Esophagus squamous epithelium (tissue), 5 donors: ENCODE measurements at regions of chr16 and their contacts with region 1.

Region 1: DNA sequence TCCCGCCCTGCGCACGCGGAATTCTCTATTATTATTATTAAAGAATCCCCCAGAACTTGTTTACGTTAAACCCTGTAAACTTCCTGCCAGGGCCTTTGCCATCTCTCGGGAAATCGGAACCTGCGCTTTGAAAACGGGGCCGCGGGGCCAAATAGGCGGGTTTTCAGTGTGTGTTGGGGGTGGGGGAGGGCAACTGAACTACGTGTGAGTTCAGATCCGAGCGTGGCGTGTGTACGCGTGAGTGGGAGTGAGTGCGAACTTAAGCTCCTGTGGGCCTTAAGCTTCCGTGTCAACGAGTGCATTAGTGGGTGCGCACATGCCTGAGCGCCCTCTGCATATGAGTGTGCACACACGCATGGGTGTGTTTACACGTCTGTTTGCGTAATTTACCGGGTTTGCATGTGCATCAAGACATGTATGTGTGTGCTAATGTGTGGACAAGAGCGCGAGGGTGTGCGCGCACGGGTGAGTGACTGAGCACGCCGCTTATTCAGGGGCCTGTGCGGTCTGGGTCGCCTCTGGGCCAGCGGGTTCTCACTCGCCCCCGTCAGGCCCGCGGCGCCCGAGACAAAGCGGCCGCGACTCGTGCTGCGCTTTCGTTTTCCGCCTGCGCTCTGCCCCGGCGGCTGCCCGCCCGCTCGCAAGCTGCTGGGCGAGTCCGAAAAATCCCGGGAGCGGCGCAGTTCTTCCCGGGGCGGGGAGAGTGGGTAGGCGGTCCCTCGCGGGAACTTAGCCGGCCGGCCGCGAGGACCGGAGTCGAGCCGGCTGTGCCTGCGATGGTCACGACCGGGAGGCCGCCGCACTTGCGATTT is 1.2 kb upstream of the FOXF1 start:
- DNase-seq: no peak
- H3K4me3 ChIP-seq: peak overlapping the region; percentile 39 to 69 (median 64)
- H3K27ac ChIP-seq: peak overlapping the region; percentile 83 to 95 (median 94)
- H3K4me1 ChIP-seq: peaks cover 19 to 77% (median 29%) of the 10 kb centered on the region in 3 donors
- H3K27me3 ChIP-seq: peaks cover 0 to 100% (median 29%) of the 10 kb centered on the region in 4 donors
- CTCF ChIP-seq: no peak
- POLR2A ChIP-seq: peak in 2 of 4 donors; percentile 20 to 54

Region 2: DNA sequence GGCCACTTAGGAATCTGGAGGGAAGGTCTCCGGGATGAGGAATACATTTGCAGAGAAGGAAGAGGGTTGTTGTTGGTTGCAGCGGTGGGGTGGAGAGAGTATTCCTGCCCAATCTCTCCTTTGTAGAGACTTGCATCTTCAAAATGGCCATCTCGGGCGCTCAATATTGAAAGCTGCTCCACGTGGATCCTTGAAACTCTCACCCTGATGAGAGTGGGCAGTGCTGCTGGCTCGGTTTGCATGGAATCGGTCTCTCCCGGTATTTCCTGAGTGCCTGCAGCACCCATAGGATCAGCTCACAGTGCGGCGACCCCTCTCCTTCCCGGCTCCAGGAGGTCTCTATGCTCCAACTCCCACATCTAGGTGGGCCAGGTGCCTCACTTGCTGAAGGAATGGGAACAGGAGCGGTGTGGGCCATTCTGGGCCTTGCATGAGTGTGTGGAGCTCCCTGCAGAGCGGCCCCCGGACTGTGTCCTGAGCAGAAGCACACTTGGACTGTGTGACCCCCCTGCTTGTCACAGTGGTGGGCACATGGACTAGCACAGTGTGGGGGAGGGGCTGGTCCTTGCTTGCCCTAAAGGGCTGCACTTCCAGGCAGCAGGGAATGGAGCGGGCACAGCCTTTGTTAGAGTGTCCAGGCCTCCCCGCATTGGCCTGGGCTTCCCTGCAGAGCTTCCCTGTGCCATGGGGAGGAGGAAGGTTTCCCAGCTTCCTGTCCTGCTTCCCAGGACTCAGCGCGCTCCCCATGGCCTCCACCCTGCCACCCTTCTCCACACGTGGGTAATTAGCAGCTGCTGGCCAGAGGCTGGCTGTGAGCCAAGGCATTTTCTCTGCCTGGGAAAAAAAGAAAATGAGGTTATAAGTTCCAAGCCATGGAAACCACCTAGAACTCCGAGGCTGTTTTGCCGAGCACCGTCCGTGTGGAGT is 470.9 kb before region 1 on chr16:
- intact Hi-C with region 1: no loop called
- DNase-seq: no peak
- H3K4me3 ChIP-seq: no peak overlapping the region
- H3K27ac ChIP-seq: no peak overlapping the region
- H3K4me1 ChIP-seq: peaks cover 0 to 10% (median 0%) of the 10 kb centered on the region in 3 donors
- H3K27me3 ChIP-seq: peaks cover 0 to 24% (median 0%) of the 10 kb centered on the region in 4 donors
- CTCF ChIP-seq: no peak
- POLR2A ChIP-seq: no peak

Region 3: GRCh38 chr16:86343027-86343787 is 165.9 kb before region 1 on chr16:
- intact Hi-C with region 1: loop called (anchors 5 kb)
- DNase-seq: no peak
- H3K4me3 ChIP-seq: peak overlapping the region in 2 of 4 donors; percentile 8 to 47
- H3K27ac ChIP-seq: peak overlapping the region; percentile 74 to 95 (median 91)
- H3K4me1 ChIP-seq: peaks cover 4 to 23% (median 13%) of the 10 kb centered on the region in 3 donors
- H3K27me3 ChIP-seq: peaks cover 0 to 61% (median 2%) of the 10 kb centered on the region in 4 donors
- CTCF ChIP-seq: no peak
- POLR2A ChIP-seq: no peak

Region 4: GRCh38 chr16:86432691-86433090 is 76.5 kb before region 1 on chr16:
- intact Hi-C with region 1: no loop called
- DNase-seq: no peak
- H3K4me3 ChIP-seq: no peak overlapping the region
- H3K27ac ChIP-seq: peak overlapping the region; percentile 2 to 85 (median 74)
- H3K4me1 ChIP-seq: peaks cover 0 to 39% (median 27%) of the 10 kb centered on the region in 3 donors
- H3K27me3 ChIP-seq: peaks cover 0 to 35% (median 0%) of the 10 kb centered on the region in 4 donors
- CTCF ChIP-seq: no peak
- POLR2A ChIP-seq: no peak

Region 5: DNA sequence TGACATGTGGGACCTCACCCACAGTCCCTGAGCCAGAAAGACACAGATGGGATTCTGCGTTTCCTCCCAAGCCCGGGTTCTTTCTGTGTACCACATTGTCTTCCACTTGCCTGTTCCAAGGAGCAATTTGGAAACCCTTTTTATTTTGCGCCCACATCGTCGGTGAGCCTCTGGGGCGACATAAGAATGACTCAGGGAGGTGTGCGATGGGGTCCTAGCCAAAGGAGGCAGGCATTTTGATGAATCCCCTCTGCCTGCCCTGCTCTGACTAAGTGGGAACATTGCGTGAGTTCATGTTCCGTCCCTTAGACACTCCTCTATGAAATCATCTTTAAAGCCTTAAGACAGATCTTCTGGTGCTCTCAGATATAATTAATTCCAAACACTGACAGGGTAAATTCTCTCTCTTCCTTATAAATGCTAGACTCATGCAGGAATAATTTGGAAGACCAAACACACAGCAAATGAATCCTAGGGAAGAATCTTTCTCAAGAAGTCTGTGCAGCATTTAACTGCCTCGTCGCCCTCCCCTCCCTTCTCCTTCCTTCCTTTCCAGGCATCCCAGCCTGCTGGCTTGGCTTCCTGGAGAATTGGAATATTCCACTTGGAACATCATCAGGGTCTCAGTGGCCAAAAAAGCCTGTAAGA is 51.5 kb before region 1 on chr16:
- intact Hi-C with region 1: no loop called
- DNase-seq: no peak
- H3K4me3 ChIP-seq: no peak overlapping the region
- H3K27ac ChIP-seq: peak overlapping the region; percentile 42 to 84 (median 66)
- H3K4me1 ChIP-seq: peaks cover 0 to 9% (median 2%) of the 10 kb centered on the region in 3 donors
- H3K27me3 ChIP-seq: peaks cover 0 to 12% (median 0%) of the 10 kb centered on the region in 4 donors
- CTCF ChIP-seq: no peak
- POLR2A ChIP-seq: no peak

Region 6: DNA sequence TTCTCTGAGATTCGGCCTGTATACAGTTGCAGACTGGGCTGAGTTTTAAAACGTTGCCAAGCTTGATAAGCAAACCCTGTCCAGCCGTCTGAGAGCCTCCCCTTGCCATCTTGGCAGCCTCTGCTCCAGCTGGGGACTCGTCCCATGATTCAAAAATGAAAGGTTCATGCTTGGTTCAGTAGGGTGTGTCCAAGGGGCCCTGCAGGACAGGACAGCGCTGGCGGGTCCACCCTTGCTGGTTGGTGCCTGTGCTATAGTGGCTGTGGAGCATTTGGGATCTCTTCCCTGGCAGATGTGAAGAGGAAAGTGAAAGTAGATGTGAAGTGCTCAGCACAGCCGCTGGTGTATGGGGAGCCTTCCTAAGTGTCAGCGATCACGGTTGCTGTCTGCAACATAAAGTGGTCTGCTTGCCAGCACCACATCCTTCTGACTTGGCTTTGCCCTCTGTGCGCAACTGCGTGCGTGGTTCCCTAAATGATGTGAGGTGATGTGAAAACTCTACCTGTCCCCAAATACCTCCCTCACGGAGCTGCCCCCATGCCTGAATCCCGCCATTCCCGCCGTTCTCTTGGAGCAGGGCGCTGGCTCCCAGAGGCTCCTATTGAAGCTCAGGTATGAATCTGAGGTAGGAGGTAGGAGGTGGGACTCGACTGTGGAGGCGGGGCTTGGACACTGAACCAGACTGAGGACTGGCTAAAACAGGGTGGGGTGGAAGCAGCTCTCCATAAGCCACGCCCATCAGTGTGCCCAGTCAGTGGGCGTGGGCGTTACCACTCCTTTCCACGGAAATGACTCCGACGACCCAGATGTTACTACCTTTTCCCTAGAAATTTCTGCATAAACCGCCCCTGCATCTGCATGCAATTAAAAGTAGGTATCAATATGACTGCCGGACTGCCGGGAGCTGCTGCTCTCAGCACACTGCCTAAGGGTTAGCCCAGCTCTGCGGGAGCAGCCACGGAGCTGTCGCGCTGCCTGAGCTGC is 110.0 kb after region 1 on chr16:
- intact Hi-C with region 1: no loop called
- DNase-seq: no peak
- H3K4me3 ChIP-seq: no peak overlapping the region
- H3K27ac ChIP-seq: no peak overlapping the region
- H3K4me1 ChIP-seq: peaks cover 0 to 7% (median 0%) of the 10 kb centered on the region in 3 donors
- H3K27me3 ChIP-seq: peaks cover 0 to 39% (median 0%) of the 10 kb centered on the region in 4 donors
- CTCF ChIP-seq: no peak
- POLR2A ChIP-seq: no peak